GM18951 (cell line): ENCODE measurements at regions of chr16 and their contacts with region 1.

Region 1: DNA sequence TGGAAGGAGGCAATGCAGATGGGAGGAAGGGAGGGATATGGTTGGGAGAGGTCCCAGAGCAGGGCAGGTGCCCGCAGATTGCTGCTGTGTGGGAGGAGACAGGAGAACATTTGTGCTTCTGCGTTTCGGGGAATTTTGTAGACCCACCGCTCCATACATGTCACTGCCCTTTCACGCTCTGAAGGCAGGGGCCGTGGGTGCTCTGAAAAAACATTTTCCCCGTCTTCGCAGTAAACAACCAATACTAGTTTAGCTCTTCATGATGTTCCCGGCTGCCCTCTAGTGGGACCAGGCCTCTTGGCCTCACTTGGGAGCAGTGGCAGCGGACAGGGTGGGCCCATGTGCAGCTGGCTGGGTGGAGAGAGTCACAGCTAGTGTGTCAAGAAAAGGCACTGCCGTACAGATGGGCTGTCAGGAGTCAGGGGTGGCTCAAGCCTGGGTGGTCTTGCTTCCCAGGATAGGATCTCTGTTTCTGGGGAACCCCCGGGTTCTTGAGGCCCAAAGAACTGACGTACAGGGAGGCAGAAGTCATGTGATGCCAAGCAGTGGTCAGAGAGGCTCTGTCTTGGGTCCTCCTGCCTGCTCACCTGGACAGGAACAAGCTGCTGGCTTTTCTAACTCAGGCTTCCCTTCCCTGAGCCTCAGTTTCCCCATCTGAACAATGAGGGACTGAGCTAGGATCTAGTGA is 46.5 kb upstream of the CPNE2 start:
- POLR2A ChIP-seq: peak; percentile 24

Region 2: DNA sequence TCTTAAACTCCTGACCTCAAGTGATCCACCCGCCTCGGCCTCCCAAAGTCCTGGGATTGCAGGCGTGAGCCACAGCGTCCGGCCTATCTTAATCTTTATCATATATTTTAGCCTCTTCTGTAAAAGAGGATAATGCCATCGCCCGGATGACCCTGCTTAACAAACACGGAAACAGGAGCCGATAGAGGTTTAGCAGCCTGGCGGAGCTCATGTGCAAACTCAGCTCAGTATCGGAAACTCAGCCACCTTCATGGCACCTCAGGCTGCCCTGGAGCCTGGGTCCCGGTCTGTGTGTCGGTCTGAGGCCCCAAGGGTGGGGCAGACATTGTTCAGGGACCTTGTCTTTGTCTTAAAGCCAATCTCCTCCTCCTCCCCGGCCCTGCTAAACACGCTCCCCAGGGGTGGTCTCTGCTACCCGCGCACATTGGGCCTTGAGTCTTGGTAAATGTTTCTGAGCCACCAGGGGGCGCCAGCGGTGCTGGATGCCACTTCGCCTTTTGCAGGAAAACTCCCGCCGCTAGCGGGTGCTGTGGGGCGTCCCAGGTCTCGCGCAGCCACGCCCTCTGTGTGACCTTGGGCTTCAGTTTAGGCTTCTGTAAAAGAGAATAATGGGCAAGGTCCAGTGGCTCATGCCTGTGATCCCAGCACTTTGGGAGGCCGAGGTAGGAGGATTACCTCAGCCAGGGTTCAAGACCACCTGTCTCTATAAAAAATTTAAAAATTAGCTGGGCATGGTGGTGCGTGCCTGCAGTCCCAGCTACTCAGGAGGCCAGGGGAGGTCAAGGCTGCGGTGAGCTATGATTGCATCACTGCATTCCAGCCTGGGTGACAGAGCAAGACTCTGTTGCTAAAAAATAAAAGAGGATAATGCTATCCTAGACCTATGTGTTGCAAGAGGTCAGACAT is 81.3 kb before region 1 on chr16:
- in situ Hi-C with region 1: loop called (anchors 5 kb)
- POLR2A ChIP-seq: no peak

Region 3: DNA sequence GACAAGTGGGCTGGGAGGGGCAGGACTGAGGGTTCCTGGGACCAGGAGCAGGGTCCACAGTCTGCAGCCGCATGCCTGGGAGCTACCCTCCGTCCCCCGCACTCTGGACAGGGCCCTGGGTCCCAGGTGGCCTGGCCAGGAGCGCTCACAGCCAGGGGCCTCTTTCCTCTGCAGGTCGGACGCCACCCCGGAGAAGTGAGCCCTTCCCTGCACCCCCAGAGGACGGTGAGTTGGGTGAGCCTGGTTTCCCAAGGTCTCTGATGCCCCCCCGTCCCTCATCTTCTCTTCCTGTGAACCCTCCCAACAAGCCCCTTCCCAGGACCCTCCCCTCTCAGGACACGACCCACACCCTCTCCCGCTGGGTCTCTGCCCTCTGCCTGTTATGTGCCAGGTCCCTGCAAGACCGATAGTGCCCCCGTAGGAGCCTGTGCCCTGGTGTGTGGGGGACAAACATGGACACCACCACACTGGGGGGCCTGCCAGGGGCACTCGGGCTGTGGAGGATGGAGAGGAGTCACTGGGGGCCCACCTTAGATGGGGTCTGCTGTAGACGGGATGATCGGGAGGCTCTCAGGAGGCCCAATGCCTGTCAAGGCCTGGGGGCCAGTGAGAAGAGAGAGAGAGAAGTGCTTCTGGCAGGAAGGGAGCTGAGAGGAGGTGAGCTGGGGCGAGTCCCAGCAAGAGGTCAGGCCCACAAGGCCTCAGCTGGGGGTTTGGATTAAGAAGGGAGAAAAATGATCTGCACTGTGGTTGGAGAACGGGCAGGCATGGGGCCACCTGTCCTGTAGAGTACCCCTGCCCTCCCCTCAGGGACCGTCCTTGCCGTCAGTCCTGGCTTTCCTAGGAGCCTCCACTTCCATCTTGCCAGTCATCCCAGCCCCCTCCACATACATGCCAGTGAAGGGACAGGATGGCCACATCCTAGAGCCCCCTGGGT is 708.2 kb after region 1 on chr16:
- in situ Hi-C with region 1: no loop called
- POLR2A ChIP-seq: no peak